ENCODE measurements at regions of chr5 and their contacts with region 1.

Region 1: GRCh38 chr5:139038613-139039305 is 159.4 kb downstream of the SIL1 start:
- DNase-seq: no peak
- H3K4me3 Mint-ChIP-seq: no peak overlapping the region
- H3K27ac Mint-ChIP-seq: no peak overlapping the region
- H3K4me1 Mint-ChIP-seq: no peaks in the 10 kb centered on the region
- H3K27me3 Mint-ChIP-seq: no peaks in the 10 kb centered on the region
- CTCF ChIP-seq: no peak

Region 2: DNA sequence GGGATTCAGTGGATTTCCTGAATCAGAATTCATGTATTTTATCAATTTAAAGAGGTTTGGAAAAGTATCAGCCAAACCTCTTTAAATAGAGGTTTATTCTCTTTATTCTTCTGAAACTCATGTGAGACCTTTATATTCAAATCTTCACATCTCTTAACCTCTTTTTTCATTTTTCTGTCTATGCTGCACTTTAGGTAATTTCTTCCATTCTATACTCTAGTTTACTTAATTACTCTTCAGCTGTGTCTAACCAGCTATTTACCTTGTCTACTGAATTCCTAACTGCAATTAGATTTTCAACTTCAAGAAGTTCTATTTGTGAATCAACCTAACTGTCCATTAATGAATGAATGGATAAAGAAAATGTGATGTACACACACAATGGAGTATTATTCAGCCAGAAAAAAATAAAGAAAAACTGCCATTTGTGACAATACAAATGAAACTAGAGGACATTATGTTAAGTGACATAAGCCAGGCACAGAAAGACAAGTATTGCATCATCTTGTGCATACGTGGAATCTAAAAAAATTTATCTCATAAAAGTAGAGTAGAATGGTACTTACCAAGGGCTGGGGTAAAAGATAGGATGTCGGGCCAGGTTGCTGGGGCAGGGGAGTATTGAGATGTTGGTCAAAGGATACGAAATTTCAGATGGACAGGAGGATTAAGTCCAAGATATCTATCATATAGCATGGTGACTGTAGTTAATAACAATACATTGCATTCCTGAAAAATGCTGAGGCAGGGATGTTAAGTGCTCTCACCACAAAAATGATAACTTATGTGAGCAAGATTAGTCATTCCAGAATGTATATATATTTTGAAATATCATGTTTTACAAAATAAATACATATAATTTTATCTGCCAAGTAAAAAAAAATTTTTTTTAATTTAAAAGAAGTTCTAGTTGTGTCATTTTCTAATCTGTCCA is 34.1 kb before region 1 on chr5:
- CTCF ChIA-PET with region 1: no interaction called
- intact Hi-C with region 1: loop called (anchors 5 kb)
- DNase-seq: no peak
- H3K4me3 Mint-ChIP-seq: no peak overlapping the region
- H3K27ac Mint-ChIP-seq: no peak overlapping the region
- H3K4me1 Mint-ChIP-seq: no peaks in the 10 kb centered on the region
- H3K27me3 Mint-ChIP-seq: no peaks in the 10 kb centered on the region
- CTCF ChIP-seq: no peak

Measured in Calu3 (cell line).